Calu3 (cell line): ENCODE measurements at regions of chr22 and their contacts with region 1.

Region 1: DNA sequence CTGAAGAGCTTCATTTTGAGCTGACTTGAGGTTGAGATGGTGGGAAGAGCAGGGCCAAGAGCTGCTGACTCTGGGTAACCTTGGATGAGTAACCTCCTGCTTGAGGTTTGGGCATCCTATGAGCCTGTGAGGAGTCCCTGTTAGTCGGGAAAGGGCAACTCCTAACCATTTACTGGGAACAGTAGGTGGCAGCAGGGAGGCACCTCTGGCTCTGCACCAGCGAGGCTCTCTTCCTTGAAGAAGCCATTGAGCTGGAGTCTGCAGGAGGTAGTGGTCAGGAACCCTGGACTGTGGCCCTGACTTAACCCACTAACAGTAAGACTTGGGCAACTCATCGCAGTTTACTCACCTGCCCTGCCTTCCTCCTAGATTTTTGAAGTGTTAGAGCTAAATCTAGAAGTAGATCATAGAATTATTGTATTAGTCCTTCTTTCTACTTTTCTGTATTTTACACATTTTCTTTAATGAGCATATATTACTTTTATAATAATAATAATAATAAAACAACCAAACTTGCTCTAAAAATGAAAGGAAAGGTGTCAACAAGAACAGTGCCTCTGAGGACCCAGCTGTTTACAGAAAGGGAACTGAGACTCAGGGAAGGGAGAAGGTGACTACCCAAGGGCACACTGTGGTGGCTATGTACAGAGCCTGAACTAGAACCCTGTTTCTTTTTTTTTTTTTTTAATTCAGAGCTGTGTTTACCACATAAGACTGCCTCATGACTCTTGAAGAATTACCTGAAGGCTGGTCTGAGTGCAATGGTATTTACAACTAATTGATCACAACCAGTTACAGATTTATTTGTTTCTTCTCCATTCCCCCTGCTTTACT is 47.5 kb downstream of the MEI1 start:
- DNase-seq: peak; percentile 84
- H3K4me3 Mint-ChIP-seq: no peak overlapping the region
- H3K27ac Mint-ChIP-seq: no peak overlapping the region
- H3K4me1 Mint-ChIP-seq: no peaks in the 10 kb centered on the region
- H3K27me3 Mint-ChIP-seq: peaks cover 65% of the 10 kb centered on the region
- CTCF ChIP-seq: peak; percentile 59

Region 2: GRCh38 chr22:41491374-41492100 is 255.2 kb before region 1 on chr22:
- CTCF ChIA-PET with region 1: no interaction called
- intact Hi-C with region 1: no loop called
- DNase-seq: no peak
- H3K4me3 Mint-ChIP-seq: no peak overlapping the region
- H3K27ac Mint-ChIP-seq: no peak overlapping the region
- H3K4me1 Mint-ChIP-seq: peaks cover 17% of the 10 kb centered on the region
- H3K27me3 Mint-ChIP-seq: no peaks in the 10 kb centered on the region
- CTCF ChIP-seq: no peak

Region 3: DNA sequence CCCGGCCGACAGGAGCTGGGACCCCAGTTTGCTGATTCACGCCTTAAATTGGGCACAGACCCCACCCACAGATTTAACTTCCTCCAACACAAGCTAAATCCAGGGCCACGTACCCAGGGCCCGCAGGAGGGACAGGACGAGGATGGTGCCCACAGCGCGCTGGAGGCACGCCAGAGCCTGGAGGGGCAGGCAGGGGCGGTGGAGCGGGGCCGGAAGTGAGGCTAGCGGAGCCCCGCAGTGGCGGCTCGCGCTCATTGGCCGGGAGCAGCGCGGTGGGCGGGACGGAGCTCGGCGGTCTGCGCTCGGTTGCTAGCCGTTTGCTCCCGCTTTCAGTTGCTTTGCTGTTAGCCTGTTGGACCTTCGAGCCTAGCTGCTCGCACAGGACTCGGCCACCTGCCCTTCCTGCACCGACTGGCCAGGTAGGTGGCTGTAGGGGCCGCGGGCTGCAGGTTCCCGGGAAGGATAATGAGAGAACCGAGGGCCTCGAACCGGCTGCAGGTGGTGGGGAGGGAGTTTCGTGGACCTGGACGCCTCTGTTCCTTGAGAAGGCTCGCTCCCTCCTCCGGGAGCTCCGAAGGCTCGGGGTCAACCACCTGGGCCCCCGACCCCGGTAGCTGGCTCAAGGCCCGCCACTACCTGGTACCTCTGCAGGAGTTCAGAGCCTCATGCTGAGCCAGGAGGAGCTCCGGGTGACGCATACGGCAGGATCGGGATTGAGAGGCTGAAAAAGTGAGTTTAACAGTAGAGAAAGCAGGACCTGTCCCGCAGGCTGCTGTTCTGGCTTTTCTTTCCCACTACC is 53.8 kb after region 1 on chr22 and contains the start of gene CCDC134:
- CTCF ChIA-PET with region 1: interaction called, 18 read pairs
- intact Hi-C with region 1: no loop called
- DNase-seq: peak; percentile 91
- H3K4me3 Mint-ChIP-seq: peak within 1 kb of the TSS; percentile 80
- H3K27ac Mint-ChIP-seq: peak within 1 kb of the TSS; percentile 37
- H3K4me1 Mint-ChIP-seq: peaks cover 11% of the 10 kb centered on the region
- H3K27me3 Mint-ChIP-seq: no peaks in the 10 kb centered on the region
- CTCF ChIP-seq: no peak
- total RNA-seq, gene CCDC134: 18.4 and 20.1 TPM in 2 replicates